Caco-2 (cell line): ENCODE measurements at regions of chr20 and their contacts with region 1.

Region 1: GRCh38 chr20:35994994-35995453 is 26.6 kb downstream of the CNBD2 start:
- DNase-seq: peak; percentile 97 to 98
- H3K4me3 ChIP-seq: no peak overlapping the region
- H3K4me3 Mint-ChIP-seq: no peak overlapping the region
- H3K27ac Mint-ChIP-seq: no peak overlapping the region
- H3K4me1 ChIP-seq: 0 out of 2 replicates have a peak, but pooled peaks cover 3% of the 10 kb centered on the region
- H3K4me1 Mint-ChIP-seq: no peaks in the 10 kb centered on the region
- H3K27me3 ChIP-seq: no peaks in the 10 kb centered on the region
- H3K27me3 Mint-ChIP-seq: no peaks in the 10 kb centered on the region
- CTCF ChIP-seq: peak; percentile 100

Region 2: DNA sequence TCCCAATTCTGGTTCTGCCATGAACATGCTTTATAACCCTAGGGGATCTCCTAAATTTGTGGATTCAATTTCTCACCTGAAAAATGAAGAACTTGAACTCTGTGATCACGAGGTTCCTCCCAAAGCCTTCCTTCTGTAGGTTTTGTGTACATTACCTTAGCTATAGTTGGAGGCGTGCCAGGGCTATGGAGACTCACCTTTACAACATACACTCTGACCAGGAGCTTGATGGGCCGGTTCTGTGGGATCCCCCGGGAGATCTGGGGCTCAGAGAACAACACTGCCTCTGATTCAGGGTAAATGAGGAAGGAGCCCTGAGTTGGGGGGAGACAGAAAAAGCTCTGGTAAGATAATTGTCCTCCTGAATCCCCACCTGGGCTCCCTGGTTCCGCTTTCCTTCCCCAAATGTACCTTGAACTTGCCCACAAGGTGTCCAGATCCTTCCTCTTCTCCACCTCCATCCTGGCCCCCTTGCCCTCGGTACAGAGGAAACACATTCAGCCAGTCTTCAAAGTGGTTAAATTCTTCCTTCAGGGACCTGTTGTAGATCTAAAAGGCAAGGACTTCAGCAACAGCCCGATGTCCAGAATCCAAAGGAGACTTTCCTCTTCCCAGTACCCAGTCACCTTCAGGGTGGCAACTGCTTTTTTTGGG is 418.9 kb before region 1 on chr20:
- CTCF ChIA-PET with region 1: no interaction called
- POLR2A ChIA-PET with region 1: no interaction called
- intact Hi-C with region 1: no loop called
- DNase-seq: peak in 1 of 2 experiments; percentile 59
- H3K4me3 ChIP-seq: no peak overlapping the region
- H3K4me3 Mint-ChIP-seq: no peak overlapping the region
- H3K27ac Mint-ChIP-seq: no peak overlapping the region
- H3K4me1 ChIP-seq: peaks cover 6% of the 10 kb centered on the region; the same call in 1 of the 2 replicates
- H3K4me1 Mint-ChIP-seq: peaks cover 9% of the 10 kb centered on the region
- H3K27me3 ChIP-seq: no peaks in the 10 kb centered on the region
- H3K27me3 Mint-ChIP-seq: no peaks in the 10 kb centered on the region
- CTCF ChIP-seq: no peak

Region 3: DNA sequence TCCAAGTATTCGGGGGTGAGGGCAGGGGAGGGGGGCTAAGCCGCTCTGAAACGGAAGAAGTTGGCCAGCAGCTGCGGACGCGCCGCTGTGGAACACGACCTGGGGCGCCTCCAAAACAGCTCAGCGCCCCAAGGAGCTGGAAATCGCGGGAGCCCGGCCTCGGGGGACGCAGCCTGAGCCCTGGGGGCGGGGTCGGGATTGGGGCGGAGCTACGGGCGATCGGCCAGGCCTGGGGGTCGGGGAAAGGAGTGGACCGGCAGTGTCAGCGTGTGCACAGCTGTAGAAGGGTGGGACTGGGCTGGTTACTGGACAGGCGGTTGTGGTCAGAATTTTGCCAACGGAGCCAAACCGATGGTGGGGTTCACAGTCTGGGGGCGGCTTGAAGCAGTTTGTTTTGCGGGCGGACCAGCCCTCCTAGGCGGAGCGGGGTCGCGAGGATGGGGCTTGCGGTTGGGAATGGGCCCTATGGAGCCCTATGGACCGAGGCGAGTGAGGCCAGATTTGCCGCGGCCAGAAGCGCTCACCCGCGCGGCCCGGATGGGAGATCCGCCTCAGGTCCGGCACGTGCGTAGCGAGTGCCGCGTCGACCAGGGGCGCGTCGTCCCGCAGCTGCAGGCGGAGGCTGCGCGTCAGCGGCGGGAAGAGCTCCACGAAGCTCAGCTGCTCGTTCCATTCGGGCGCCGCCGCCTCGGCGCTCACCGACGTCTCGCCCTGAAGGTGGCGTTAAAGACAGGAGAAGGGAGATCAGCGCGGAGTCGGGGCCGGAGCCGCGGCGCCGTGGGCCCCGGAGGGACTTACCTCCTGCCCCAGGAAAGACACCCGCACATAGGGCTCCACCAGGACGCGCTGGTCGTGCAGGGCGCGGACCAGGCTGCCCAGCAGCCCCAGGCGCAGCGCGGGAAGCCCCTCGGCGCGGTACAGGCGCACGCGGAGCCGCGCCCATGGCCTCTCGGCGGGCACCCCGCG is 393.7 kb before region 1 on chr20:
- CTCF ChIA-PET with region 1: no interaction called
- POLR2A ChIA-PET with region 1: no interaction called
- intact Hi-C with region 1: no loop called
- DNase-seq: peak; percentile 90
- H3K4me3 ChIP-seq: peak overlapping the region; percentile 51
- H3K4me3 Mint-ChIP-seq: peak overlapping the region; percentile 68
- H3K27ac Mint-ChIP-seq: no peak overlapping the region
- H3K4me1 ChIP-seq: peaks cover 5% of the 10 kb centered on the region; the same call in 1 of the 2 replicates
- H3K4me1 Mint-ChIP-seq: no peaks in the 10 kb centered on the region
- H3K27me3 ChIP-seq: no peaks in the 10 kb centered on the region
- H3K27me3 Mint-ChIP-seq: peaks cover 10% of the 10 kb centered on the region
- CTCF ChIP-seq: peak; percentile 48 to 78

Region 4: GRCh38 chr20:36017034-36017951 is 22.3 kb after region 1 on chr20:
- CTCF ChIA-PET with region 1: interaction called, 26 read pairs
- POLR2A ChIA-PET with region 1: interaction called, 3 read pairs
- intact Hi-C with region 1: loop called (anchors 1 kb)
- DNase-seq: peak; percentile 29 to 37
- H3K4me3 ChIP-seq: no peak overlapping the region
- H3K4me3 Mint-ChIP-seq: no peak overlapping the region
- H3K27ac Mint-ChIP-seq: peak overlapping the region; percentile 77
- H3K4me1 ChIP-seq: peaks cover 20% of the 10 kb centered on the region
- H3K4me1 Mint-ChIP-seq: peaks cover 22% of the 10 kb centered on the region
- H3K27me3 ChIP-seq: no peaks in the 10 kb centered on the region
- H3K27me3 Mint-ChIP-seq: no peaks in the 10 kb centered on the region
- CTCF ChIP-seq: no peak

Region 5: DNA sequence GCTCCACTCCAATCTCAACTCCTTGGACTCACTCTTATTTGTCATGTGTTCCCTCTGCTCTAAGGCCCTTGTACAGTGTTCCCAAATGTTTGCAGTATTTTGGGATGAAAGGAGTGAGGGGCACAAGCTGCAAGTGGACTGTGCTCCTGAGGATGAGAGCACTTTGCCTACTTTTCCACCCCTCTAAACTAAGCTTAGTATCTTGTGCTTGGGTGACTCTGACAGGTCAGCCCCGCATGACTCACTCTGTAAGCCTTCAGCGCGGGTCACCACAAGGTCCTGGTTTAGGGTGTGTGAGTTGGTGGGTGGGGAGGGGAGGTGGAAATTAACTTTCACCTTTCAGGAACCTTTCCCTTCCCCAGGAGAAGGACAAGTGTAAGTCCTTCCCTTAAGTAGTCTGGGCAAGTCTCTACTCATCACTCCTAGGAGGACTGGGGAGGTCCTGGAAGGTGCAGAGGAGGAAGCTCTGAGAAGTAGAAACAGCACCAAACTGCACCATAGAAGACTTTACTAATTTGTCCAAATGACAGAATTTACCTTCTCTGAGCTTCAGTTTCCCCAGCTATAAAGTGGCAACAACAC is 90.8 kb after region 1 on chr20:
- CTCF ChIA-PET with region 1: interaction called, 36 read pairs
- POLR2A ChIA-PET with region 1: interaction called, 7 read pairs
- intact Hi-C with region 1: loop called (anchors 1 kb)
- DNase-seq: peak; percentile 95 to 99
- H3K4me3 ChIP-seq: no peak overlapping the region
- H3K4me3 Mint-ChIP-seq: peak overlapping the region; percentile 66
- H3K27ac Mint-ChIP-seq: peak overlapping the region; percentile 99
- H3K4me1 ChIP-seq: peaks cover 80% of the 10 kb centered on the region
- H3K4me1 Mint-ChIP-seq: peaks cover 67% of the 10 kb centered on the region
- H3K27me3 ChIP-seq: no peaks in the 10 kb centered on the region
- H3K27me3 Mint-ChIP-seq: no peaks in the 10 kb centered on the region
- CTCF ChIP-seq: no peak

Region 6: GRCh38 chr20:36116807-36117441 is 121.9 kb after region 1 on chr20:
- CTCF ChIA-PET with region 1: interaction called, 12 read pairs
- POLR2A ChIA-PET with region 1: no interaction called
- intact Hi-C with region 1: no loop called
- DNase-seq: no peak
- H3K4me3 ChIP-seq: no peak overlapping the region
- H3K4me3 Mint-ChIP-seq: no peak overlapping the region
- H3K27ac Mint-ChIP-seq: no peak overlapping the region
- H3K4me1 ChIP-seq: peaks cover 16% of the 10 kb centered on the region
- H3K4me1 Mint-ChIP-seq: peaks cover 33% of the 10 kb centered on the region
- H3K27me3 ChIP-seq: no peaks in the 10 kb centered on the region
- H3K27me3 Mint-ChIP-seq: no peaks in the 10 kb centered on the region
- CTCF ChIP-seq: no peak

Region 7: GRCh38 chr20:36199345-36200257 is 204.6 kb after region 1 on chr20:
- CTCF ChIA-PET with region 1: interaction called, 28 read pairs
- POLR2A ChIA-PET with region 1: interaction called, 11 read pairs
- intact Hi-C with region 1: loop called (anchors 1 kb)
- DNase-seq: peak; percentile 90 to 93
- H3K4me3 ChIP-seq: no peak overlapping the region
- H3K4me3 Mint-ChIP-seq: no peak overlapping the region
- H3K27ac Mint-ChIP-seq: no peak overlapping the region
- H3K4me1 ChIP-seq: no peaks in the 10 kb centered on the region
- H3K4me1 Mint-ChIP-seq: no peaks in the 10 kb centered on the region
- H3K27me3 ChIP-seq: no peaks in the 10 kb centered on the region
- H3K27me3 Mint-ChIP-seq: no peaks in the 10 kb centered on the region
- CTCF ChIP-seq: peak; percentile 99 to 100